Naive thymus-derived CD4-positive, alpha-beta T cell (primary cell): ENCODE measurements at regions of chr12 and their contacts with region 1.

Region 1: GRCh38 chr12:121626087-121626852 is at the start of gene ORAI1:
- DNase-seq: peak; percentile 93 to 99 (median 97)
- ATAC-seq: peak; percentile 88
- H3K4me3 ChIP-seq: peak within 1 kb of the TSS; percentile 77
- H3K4me3 Mint-ChIP-seq: peak within 1 kb of the TSS; percentile 78 to 99 (median 94)
- H3K27ac ChIP-seq: peak within 1 kb of the TSS; percentile 97
- H3K27ac Mint-ChIP-seq: peak within 1 kb of the TSS; percentile 91 to 98 (median 95)
- H3K4me1 ChIP-seq: peaks cover 29 to 36% of the 10 kb centered on the region in 2 donors
- H3K4me1 Mint-ChIP-seq: peaks cover 32 to 49% (median 44%) of the 10 kb centered on the region in 7 donors
- H3K27me3 ChIP-seq: no peaks in the 10 kb centered on the region
- H3K27me3 Mint-ChIP-seq: no peaks in the 10 kb centered on the region
- total RNA-seq, gene ORAI1: 34.4 to 73.5 (median 50.6) TPM

Region 2: GRCh38 chr12:121499929-121500793 is 126.1 kb before region 1 on chr12:
- CTCF ChIA-PET with region 1: interaction called, 4 read pairs
- POLR2A ChIA-PET with region 1: interaction called, 4 read pairs
- intact Hi-C with region 1: loop called (anchors 1 kb)
- DNase-seq: peak; percentile 44 to 80 (median 68)
- ATAC-seq: peak; percentile 93
- H3K4me3 ChIP-seq: no peak overlapping the region
- H3K4me3 Mint-ChIP-seq: no peak overlapping the region
- H3K27ac ChIP-seq: no peak overlapping the region
- H3K27ac Mint-ChIP-seq: peak overlapping the region in 2 of 9 donors; percentile 8 to 32
- H3K4me1 ChIP-seq: peaks cover 0 to 11% of the 10 kb centered on the region in 2 donors
- H3K4me1 Mint-ChIP-seq: peaks cover 0 to 19% (median 13%) of the 10 kb centered on the region in 7 donors
- H3K27me3 ChIP-seq: no peaks in the 10 kb centered on the region
- H3K27me3 Mint-ChIP-seq: no peaks in the 10 kb centered on the region

Region 3: DNA sequence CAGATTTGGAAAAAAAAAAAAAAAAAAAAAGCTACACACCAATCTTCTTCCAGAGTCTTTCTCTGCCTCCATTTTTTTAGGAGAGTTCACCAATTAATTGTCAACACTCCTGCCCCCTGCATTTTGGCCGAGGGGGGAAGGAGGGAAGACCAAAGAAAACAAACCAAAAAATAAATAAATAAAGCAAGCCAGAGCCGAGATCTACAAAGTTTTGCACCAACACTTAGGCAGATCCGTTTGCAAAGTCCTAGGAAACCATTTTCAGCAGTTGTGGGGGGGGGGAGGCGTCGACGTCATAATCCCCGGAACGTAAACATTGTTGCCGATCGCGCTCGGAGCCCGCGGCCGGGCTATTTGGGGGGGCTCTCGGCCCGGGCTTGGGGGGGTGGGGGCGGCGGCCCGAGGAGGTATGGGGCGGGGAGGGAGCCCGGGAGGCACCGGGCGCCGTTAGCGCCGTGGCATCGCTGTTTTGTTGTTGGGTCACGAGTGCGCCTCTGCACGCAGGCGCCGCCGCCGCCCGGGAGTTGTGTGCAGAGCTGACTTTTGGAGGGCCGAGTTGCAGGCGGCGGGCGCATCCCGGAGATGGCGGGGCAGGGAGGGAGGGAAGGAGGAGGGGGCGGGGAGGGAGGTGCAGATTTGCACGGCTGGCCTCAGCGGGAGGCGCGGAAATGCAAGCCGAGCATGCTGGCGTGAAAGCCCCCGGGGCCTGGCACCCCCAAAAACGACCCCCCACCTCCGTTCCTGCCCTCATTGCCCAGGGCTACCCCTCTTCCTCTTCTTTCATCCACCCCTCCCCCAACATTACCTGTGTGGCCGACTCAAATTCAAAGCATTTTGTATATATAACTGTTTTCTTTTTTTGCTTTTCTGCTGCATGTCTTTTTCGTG is 46.0 kb before region 1 on chr12:
- CTCF ChIA-PET with region 1: interaction called, 11 read pairs
- POLR2A ChIA-PET with region 1: interaction called, 82 read pairs
- intact Hi-C with region 1: loop called (anchors 1 kb)
- DNase-seq: peak; percentile 61 to 79 (median 74)
- ATAC-seq: peak; percentile 76
- H3K4me3 ChIP-seq: peak overlapping the region; percentile 75
- H3K4me3 Mint-ChIP-seq: peak overlapping the region; percentile 92 to 100 (median 98)
- H3K27ac ChIP-seq: peak overlapping the region; percentile 91
- H3K27ac Mint-ChIP-seq: peak overlapping the region; percentile 92 to 99 (median 99)
- H3K4me1 ChIP-seq: peaks cover 25 to 28% of the 10 kb centered on the region in 2 donors
- H3K4me1 Mint-ChIP-seq: peaks cover 24 to 58% (median 49%) of the 10 kb centered on the region in 7 donors
- H3K27me3 ChIP-seq: no peaks in the 10 kb centered on the region
- H3K27me3 Mint-ChIP-seq: no peaks in the 10 kb centered on the region

Region 4: DNA sequence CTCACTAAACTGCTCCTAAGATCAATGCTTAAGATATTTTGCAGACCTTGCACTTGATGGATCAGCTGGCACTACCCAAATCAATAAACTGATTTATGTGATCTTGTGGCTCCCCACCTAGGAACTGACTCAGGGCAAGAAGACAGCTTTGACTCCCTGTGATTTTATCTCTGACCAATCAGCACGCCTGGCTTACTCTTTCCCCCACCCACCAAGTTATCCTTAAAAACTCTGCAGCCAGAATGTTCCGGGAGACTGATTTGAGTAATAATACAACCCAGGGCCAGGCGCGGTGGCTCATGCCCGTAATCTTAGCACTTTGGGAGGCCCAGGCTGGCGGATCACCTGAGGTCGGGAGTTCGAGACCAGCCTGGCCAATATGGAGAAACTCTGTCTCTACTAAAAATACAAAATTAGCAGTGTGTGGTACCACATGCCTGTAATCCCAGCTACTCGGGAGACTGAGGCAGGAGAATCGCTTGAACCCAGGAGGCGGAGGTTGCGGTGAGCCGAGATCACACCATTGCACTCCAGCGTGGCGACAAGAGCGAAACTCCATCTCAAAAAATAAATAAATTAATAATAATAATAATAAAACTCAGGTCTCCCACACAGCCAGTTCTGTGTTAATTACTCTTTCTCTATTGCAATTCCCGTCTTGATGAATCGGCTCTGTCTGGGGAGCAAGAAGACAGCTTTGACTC is 31.2 kb after region 1 on chr12:
- CTCF ChIA-PET with region 1: interaction called, 20 read pairs
- POLR2A ChIA-PET with region 1: interaction called, 89 read pairs
- intact Hi-C with region 1: loop called in 1 of 2 experiments (anchors 2 kb)
- DNase-seq: peak in 1 of 9 donors; percentile 37
- ATAC-seq: no peak
- H3K4me3 ChIP-seq: no peak overlapping the region
- H3K4me3 Mint-ChIP-seq: peak overlapping the region; percentile 31 to 99 (median 68)
- H3K27ac ChIP-seq: peak overlapping the region; percentile 35
- H3K27ac Mint-ChIP-seq: peak overlapping the region; percentile 70 to 100 (median 97)
- H3K4me1 ChIP-seq: peaks cover 38 to 47% of the 10 kb centered on the region in 2 donors
- H3K4me1 Mint-ChIP-seq: peaks cover 43 to 77% (median 64%) of the 10 kb centered on the region in 7 donors
- H3K27me3 ChIP-seq: no peaks in the 10 kb centered on the region
- H3K27me3 Mint-ChIP-seq: no peaks in the 10 kb centered on the region

Region 5: DNA sequence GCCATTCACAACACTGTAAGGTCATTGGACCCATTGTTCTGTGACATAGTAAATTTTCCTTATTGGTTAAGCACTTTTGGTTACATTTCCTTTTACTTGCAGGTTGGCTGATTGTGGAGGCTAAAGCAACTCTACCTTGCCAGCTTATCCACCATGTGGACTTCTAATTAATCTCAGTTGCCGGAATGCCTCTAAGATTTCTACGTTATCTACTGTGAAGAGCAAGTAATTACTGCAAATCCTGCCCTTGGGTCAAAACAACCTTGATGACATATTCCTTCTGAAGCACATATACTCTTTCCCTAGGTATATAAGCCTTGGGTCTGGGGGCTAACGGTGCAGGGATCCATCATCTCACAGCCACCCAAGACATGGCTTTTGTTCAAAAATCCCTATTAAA is 62.7 kb after region 1 on chr12:
- CTCF ChIA-PET with region 1: interaction called, 15 read pairs
- POLR2A ChIA-PET with region 1: interaction called, 20 read pairs
- intact Hi-C with region 1: loop called (anchors 1 kb)
- DNase-seq: no peak
- ATAC-seq: no peak
- H3K4me3 ChIP-seq: no peak overlapping the region
- H3K4me3 Mint-ChIP-seq: no peak overlapping the region
- H3K27ac ChIP-seq: no peak overlapping the region
- H3K27ac Mint-ChIP-seq: peak overlapping the region in 6 of 9 donors; percentile 8 to 36 (median 22)
- H3K4me1 ChIP-seq: peaks cover 0 to 4% of the 10 kb centered on the region in 2 donors
- H3K4me1 Mint-ChIP-seq: peaks cover 0 to 16% (median 10%) of the 10 kb centered on the region in 7 donors
- H3K27me3 ChIP-seq: no peaks in the 10 kb centered on the region
- H3K27me3 Mint-ChIP-seq: peaks cover 0 to 6% (median 0%) of the 10 kb centered on the region in 5 donors

Region 6: GRCh38 chr12:121719926-121720414 is 93.7 kb after region 1 on chr12:
- CTCF ChIA-PET with region 1: no interaction called
- POLR2A ChIA-PET with region 1: no interaction called
- intact Hi-C with region 1: no loop called
- DNase-seq: no peak
- ATAC-seq: no peak
- H3K4me3 ChIP-seq: no peak overlapping the region
- H3K4me3 Mint-ChIP-seq: no peak overlapping the region
- H3K27ac ChIP-seq: no peak overlapping the region
- H3K27ac Mint-ChIP-seq: peak overlapping the region in 2 of 9 donors; percentile 56 to 59
- H3K4me1 ChIP-seq: no peaks in the 10 kb centered on the region
- H3K4me1 Mint-ChIP-seq: peaks cover 0 to 5% (median 0%) of the 10 kb centered on the region in 7 donors
- H3K27me3 ChIP-seq: no peaks in the 10 kb centered on the region
- H3K27me3 Mint-ChIP-seq: no peaks in the 10 kb centered on the region

Region 7: GRCh38 chr12:121888478-121889266 is 262.4 kb after region 1 on chr12 and contains the start of gene PSMD9:
- CTCF ChIA-PET with region 1: no interaction called
- POLR2A ChIA-PET with region 1: no interaction called
- intact Hi-C with region 1: loop called in 1 of 2 experiments (anchors 2 kb)
- DNase-seq: peak; percentile 96 to 99 (median 98)
- ATAC-seq: peak; percentile 98
- H3K4me3 ChIP-seq: peak within 1 kb of the TSS; percentile 74
- H3K4me3 Mint-ChIP-seq: peak within 1 kb of the TSS; percentile 85 to 100 (median 98)
- H3K27ac ChIP-seq: peak within 1 kb of the TSS; percentile 98
- H3K27ac Mint-ChIP-seq: peak within 1 kb of the TSS; percentile 92 to 100 (median 99)
- H3K4me1 ChIP-seq: peaks cover 19 to 21% of the 10 kb centered on the region in 2 donors
- H3K4me1 Mint-ChIP-seq: peaks cover 18 to 50% (median 40%) of the 10 kb centered on the region in 7 donors
- H3K27me3 ChIP-seq: no peaks in the 10 kb centered on the region
- H3K27me3 Mint-ChIP-seq: peaks cover 0 to 4% (median 0%) of the 10 kb centered on the region in 5 donors
- total RNA-seq, gene PSMD9: 36.7 to 55.2 (median 46.9) TPM